ENCODE measurements at regions of chr22 and their contacts with region 1.

Region 1: GRCh38 chr22:40533712-40534378 is 102.7 kb downstream of the MRTFA start:
- DNase-seq: peak; percentile 61
- H3K4me3 Mint-ChIP-seq: peak overlapping the region; percentile 83
- H3K27ac Mint-ChIP-seq: peak overlapping the region; percentile 85
- H3K4me1 Mint-ChIP-seq: peaks cover 54% of the 10 kb centered on the region
- H3K27me3 Mint-ChIP-seq: no peaks in the 10 kb centered on the region

Region 2: DNA sequence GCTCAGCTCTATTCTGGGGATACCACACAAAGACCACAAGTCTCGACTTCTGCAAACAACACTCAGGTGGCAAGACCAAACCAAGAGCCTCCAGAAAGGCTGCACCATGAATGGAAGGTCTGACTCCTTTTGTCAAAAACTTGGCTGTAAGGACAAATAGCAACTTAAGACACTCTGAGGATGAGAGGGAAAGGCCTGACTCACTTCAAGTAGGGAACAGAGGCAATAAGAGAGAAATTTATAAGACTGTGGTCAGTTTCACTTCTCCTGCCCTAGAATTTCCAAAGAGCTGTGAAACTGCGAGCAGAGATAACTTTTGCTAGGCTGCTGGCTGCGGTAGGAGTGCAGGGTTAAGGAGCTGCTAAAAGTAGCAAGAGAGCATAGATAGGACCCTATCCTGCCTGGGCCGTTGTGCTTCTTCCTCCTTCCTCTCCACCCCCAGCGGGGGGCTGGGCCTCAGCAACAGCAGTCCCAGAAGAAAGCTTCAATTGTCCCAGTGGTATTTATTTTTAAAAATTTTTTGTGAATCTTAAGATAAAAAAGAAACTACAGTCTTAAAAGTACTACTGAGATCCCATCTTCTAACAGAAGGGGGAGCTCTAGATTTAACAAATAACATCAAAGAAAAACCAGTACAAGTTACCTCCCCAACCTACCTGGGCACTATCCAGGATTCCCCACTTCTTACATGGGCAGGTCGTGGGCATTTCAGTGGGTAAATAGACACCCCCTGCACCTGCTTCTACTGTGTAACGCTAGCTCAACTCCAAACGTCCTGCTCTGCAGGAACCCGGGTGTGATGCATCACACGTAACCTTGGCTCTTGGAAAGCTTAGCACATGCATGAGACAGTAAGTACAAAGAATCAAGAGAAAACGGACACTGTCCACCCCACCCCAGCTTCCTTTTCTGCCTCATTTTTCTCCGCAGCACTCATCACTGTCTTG is 97.1 kb before region 1 on chr22:
- intact Hi-C with region 1: no loop called
- DNase-seq: no peak
- H3K4me3 Mint-ChIP-seq: peak overlapping the region; percentile 7
- H3K27ac Mint-ChIP-seq: peak overlapping the region; percentile 74
- H3K4me1 Mint-ChIP-seq: peaks cover 43% of the 10 kb centered on the region
- H3K27me3 Mint-ChIP-seq: no peaks in the 10 kb centered on the region

Region 3: GRCh38 chr22:40519284-40519947 is 14.4 kb before region 1 on chr22:
- intact Hi-C with region 1: loop called (anchors 2 kb)
- DNase-seq: no peak
- H3K4me3 Mint-ChIP-seq: peak overlapping the region; percentile 51
- H3K27ac Mint-ChIP-seq: peak overlapping the region; percentile 89
- H3K4me1 Mint-ChIP-seq: peaks cover 31% of the 10 kb centered on the region
- H3K27me3 Mint-ChIP-seq: no peaks in the 10 kb centered on the region

Region 4: DNA sequence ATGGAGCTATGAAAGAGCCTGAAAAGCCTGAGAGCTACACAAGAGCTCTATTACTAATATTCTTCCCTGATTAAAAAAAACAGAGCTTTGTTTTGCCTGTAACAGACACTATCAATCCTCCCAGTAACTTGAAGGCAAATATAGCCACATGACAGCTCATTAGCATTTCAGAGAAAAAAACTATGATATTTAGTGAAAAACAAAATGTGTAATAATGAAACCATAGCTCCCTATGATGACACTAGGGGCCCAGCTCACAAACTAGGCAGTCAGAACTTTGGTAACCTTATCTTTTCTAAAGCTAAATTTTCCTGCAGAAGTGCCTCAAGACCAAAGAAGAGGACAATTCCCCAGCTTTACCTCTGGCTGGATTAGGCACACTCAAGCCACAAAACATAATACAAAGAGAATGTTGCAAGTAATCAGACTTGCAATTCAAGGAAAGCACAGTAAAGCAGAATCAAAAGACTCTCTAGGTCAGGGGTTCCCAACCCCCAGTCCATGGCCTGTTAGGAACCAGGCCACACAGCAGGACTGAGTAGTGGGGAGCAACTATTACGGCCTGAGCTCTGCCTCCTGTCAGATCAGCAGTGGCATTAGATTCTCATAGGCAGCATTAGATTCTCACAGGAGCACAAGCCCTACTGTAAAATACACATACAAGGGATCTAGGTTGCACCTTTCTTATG is 49.4 kb after region 1 on chr22:
- intact Hi-C with region 1: loop called (anchors 1 kb)
- DNase-seq: no peak
- H3K4me3 Mint-ChIP-seq: peak overlapping the region; percentile 27
- H3K27ac Mint-ChIP-seq: peak overlapping the region; percentile 84
- H3K4me1 Mint-ChIP-seq: peaks cover 43% of the 10 kb centered on the region
- H3K27me3 Mint-ChIP-seq: no peaks in the 10 kb centered on the region

Region 5: DNA sequence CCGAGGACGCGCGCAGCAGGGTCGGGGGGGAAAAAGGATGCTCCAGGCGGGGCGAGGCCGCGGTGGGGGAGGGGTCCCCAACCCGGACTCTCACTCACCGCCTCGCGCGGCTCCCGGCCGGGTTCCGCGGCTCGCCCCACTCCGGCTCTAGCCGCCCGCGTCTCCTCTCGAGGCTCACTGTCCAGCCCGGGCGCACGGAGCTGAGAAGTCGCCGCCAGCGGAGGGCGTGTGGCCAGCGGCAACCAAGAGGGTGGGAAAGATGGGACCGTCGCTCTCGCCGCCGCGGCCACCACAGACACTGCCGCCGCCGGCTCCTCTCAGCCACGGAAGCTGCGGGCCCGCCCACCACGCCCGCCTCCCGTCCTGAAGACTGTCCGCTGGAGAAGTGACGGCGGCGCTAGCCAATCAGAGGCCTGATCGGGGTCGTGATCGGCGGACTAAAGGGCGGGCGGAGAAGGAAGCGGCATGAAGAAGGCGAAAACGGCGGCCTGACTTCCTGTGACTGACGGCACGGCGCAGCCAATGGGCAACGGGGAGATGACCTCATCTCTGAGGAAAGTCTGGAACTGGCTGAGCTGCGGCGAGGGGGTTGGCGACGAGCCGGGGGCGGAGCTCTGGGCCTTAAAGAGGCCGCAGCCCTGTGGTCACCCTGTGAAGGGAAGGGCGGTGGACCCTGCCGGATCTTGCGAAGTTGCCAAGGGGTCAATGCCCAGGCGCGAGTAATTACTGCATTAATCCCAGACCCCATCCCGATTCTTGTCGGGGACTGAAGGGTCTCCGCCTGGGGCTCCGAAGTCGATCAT is 102.7 kb after region 1 on chr22 and contains the start of gene MRTFA:
- intact Hi-C with region 1: loop called (anchors 2 kb)
- DNase-seq: peak; percentile 100
- H3K4me3 Mint-ChIP-seq: peak within 1 kb of the TSS; percentile 94
- H3K27ac Mint-ChIP-seq: peak within 1 kb of the TSS; percentile 96
- H3K4me1 Mint-ChIP-seq: peaks cover 24% of the 10 kb centered on the region
- H3K27me3 Mint-ChIP-seq: no peaks in the 10 kb centered on the region
- total RNA-seq, gene MRTFA: 48.9 and 51.6 TPM in 2 replicates